Activated CD4-positive, alpha-beta T cell treated with anti-CD3 and anti-CD28 coated beads, Interleukin-2, amount 10 ng/mL, durations not matched to agents 7 days and 5 days (primary cell): ENCODE measurements at regions of chr2 and their contacts with region 1.

Region 1: GRCh38 chr2:181104512-181105115 is 124.2 kb downstream of the UBE2E3 start:
- DNase-seq: peak; percentile 45
- H3K4me3 Mint-ChIP-seq: no peak overlapping the region
- H3K27ac Mint-ChIP-seq: no peak overlapping the region
- H3K4me1 Mint-ChIP-seq: peaks cover 48% of the 10 kb centered on the region
- H3K27me3 Mint-ChIP-seq: peaks cover 3% of the 10 kb centered on the region

Region 2: DNA sequence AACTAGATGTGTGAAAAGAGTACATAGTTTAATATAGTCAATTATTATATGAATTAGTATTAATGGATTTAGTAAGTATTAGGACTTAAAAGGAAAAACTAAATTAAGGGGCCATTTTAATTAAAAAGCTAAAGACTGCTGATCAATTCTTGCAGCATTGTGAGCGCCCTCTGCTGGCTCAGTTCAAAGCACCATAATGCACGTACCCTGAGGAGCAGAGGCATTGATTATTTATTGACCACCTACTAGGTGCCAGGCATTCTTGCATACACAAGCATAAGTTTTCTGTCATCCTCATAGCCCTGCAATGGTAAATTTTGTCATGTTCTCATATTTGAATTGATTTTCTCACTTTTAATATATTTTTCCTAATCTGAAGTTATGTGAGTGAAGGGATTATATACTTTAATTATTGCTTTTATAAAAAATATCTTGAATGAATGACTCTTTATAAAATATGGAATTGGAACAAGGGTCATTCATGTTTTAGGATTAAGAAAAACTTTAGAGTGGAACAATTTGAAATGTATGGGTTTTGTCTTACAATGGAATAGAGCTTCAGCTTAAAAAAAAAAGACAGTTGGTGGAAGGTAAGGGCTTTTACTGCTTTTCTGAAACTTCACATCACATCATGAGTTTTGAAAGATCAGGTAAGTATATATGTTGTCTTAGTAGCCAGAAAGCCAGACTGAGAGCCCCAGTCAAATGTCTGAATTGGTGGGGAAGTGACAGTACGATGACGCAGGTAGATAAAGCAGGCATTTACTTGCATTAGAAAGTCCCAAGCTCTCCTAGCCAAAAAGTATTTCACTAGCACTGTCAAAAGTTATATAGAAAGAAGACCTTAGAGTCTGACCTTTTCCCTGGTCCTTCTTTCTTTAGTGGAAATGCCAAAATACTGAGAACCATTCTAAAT is 362.3 kb after region 1 on chr2:
- CTCF ChIA-PET with region 1: interaction called, 15 read pairs
- POLR2A ChIA-PET with region 1: no interaction called
- DNase-seq: peak; percentile 85
- H3K4me3 Mint-ChIP-seq: peak overlapping the region; percentile 22
- H3K27ac Mint-ChIP-seq: no peak overlapping the region
- H3K4me1 Mint-ChIP-seq: peaks cover 89% of the 10 kb centered on the region
- H3K27me3 Mint-ChIP-seq: no peaks in the 10 kb centered on the region